Caco-2 (cell line): ENCODE measurements at regions of chr16 and their contacts with region 1.

Region 1: DNA sequence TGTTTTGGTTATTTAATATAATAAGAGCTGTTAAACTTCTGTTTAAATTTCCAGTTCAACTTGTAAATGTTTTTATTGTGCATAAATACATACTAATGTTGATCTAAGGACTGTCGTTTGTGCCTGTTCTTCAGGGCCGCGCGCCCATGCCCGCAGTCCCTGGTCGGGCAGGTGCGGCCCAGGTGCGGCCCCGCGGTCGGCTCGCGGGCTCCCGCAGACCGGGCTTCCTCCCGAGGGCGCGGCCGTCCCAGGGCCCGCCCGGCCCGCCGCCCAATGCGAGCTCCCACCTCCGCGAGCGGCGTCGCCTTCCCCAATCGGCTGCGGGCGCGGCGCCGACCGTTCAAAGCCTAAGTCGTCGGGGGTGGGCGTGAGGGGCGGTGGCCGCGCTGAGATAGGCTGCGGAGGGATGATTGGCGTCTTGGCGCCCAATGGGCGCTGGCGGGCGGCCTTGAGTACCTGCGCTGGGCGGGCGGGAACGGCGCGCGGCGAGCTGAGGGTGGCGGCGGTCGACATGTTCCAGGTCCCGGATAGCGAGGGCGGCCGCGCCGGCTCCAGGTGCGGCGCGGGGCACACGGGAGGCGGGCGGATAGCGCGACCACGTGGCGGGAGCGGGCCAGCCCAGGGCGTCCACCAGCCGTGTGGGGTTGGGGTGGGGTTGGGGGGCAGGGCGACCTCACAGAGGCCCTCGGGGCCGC is at the start of gene JPT2:
- DNase-seq: peak; percentile 96 to 97
- H3K4me3 ChIP-seq: peak within 1 kb of the TSS; percentile 82
- H3K4me3 Mint-ChIP-seq: peak within 1 kb of the TSS; percentile 96
- H3K27ac Mint-ChIP-seq: peak within 1 kb of the TSS; percentile 91
- H3K4me1 ChIP-seq: peaks cover 9% of the 10 kb centered on the region; the same call in 1 of the 2 replicates
- H3K4me1 Mint-ChIP-seq: peaks cover 8% of the 10 kb centered on the region
- H3K27me3 ChIP-seq: no peaks in the 10 kb centered on the region
- H3K27me3 Mint-ChIP-seq: no peaks in the 10 kb centered on the region
- CTCF ChIP-seq: no peak
- total RNA-seq, gene JPT2: 170 and 178 TPM in 2 replicates

Region 2: DNA sequence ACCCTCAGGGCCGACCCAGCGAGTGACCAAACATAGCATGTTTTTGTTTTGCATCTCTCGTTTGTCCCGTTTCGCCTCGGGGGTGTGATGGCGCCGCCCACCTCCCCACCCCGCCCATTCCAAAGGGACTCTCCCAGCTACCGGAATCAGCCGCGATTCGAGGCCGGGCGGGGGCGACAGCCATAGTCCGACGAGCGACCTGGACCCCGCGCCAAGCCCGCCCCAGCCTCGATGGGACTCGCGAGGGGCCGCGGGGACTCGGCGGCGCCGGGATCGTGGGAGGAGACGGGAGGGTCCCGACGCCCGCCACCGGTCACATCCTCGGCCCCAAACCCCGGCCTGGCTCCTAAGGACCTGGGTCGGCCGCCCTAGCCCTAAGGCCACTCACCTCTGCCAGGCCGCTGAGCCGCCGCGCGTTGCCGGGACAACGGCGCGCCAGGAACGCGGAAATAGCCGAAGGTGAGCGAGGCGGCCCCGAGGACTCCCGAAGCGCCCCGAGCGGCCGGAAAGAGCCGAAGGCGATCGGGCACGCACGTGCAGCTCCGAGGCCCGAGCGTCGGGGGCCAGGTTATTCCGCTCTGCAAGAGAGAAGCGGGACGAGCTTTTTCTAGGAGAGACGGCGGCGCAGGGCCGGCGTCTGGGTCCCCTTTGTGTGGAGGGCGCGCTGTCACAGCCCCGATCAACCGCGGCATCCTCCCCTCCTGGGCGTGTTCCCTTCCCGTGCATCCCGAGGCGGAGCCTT is 67.5 kb before region 1 on chr16:
- CTCF ChIA-PET with region 1: interaction called, 6 read pairs
- POLR2A ChIA-PET with region 1: no interaction called
- intact Hi-C with region 1: loop called (anchors 10 kb)
- DNase-seq: peak; percentile 87 to 95
- H3K4me3 ChIP-seq: peak overlapping the region; percentile 68
- H3K4me3 Mint-ChIP-seq: peak overlapping the region; percentile 80
- H3K27ac Mint-ChIP-seq: peak overlapping the region; percentile 92
- H3K4me1 ChIP-seq: peaks cover 5% of the 10 kb centered on the region; the same call in 1 of the 2 replicates
- H3K4me1 Mint-ChIP-seq: peaks cover 5% of the 10 kb centered on the region
- H3K27me3 ChIP-seq: no peaks in the 10 kb centered on the region
- H3K27me3 Mint-ChIP-seq: no peaks in the 10 kb centered on the region
- CTCF ChIP-seq: no peak

Region 3: DNA sequence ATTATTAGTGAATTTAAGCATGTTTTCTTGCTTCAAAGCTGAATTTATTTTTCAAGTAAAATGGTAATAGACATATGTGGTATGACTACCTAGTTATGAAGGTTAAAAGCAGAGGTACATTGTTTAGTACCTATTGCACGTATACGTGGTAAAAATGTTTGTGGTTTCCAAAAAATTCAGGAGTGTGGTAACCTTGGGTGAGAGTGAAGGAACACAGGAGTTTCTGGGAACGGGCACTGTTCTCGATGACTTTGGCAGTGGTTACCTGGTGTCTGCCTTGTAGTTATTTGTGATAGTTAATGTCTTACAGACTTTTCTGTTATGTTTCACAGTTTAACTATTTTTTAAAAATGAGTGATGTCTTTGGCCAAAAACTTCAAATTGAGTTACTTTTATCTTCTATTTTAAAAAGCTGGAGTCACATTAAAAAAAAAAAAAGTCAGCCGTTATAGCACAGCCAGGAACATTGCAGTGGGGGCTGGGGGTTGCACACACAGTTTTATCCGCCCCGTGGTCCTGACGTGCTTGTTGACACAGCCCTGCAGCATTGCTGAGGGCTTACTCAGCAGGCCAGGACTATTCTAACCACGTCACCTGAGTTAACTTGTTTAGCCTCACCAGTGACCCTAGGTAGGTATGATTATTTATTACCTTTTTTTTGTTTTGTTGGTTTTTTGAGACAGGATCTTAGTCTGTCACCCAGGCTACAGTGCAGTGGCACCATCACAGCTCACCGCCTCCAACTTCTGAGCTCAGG is 11.0 kb after region 1 on chr16:
- CTCF ChIA-PET with region 1: interaction called, 12 read pairs
- POLR2A ChIA-PET with region 1: interaction called, 8 read pairs
- intact Hi-C with region 1: loop called (anchors 1 kb)
- DNase-seq: peak; percentile 85 to 89
- H3K4me3 ChIP-seq: no peak overlapping the region
- H3K4me3 Mint-ChIP-seq: peak overlapping the region; percentile 72
- H3K27ac Mint-ChIP-seq: peak overlapping the region; percentile 97
- H3K4me1 ChIP-seq: peaks cover 29% of the 10 kb centered on the region
- H3K4me1 Mint-ChIP-seq: peaks cover 26% of the 10 kb centered on the region
- H3K27me3 ChIP-seq: no peaks in the 10 kb centered on the region
- H3K27me3 Mint-ChIP-seq: no peaks in the 10 kb centered on the region
- CTCF ChIP-seq: no peak

Region 4: DNA sequence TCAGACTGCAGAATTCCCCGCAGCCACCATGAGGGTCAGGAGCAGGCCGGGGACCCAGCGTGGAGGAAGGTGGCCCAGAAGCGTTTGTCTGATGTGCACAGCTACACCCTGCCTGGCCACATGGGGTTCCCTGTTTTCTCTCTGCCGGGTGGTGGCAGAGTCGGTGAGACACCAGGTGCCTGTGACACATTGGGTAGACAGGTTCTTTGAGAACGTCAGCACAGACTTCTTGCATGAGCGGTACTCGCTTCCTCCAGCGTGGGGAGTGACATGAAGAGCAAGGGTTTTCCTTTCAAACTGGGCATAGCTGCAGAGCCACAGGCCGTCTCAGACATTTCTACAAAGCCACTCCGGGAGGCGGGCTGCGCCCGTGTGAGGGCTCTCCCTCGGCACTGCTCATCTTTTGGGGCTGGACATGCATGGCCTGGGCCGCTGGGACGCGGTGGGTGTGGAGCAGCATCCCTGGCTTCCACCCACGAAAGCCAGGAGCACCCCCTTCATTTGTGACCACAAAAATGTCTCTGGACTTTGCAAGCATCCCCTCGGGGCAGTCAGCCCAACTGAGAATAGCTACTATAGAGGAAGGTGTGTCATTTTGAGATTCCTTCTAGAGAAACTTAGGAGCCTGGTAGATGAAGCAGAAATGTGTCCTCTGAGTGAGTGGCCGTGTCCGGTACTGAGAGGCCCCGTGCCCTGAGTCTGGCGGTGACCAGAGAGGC is 67.4 kb after region 1 on chr16:
- CTCF ChIA-PET with region 1: no interaction called
- POLR2A ChIA-PET with region 1: no interaction called
- intact Hi-C with region 1: no loop called
- DNase-seq: no peak
- H3K4me3 ChIP-seq: no peak overlapping the region
- H3K4me3 Mint-ChIP-seq: no peak overlapping the region
- H3K27ac Mint-ChIP-seq: no peak overlapping the region
- H3K4me1 ChIP-seq: no peaks in the 10 kb centered on the region
- H3K4me1 Mint-ChIP-seq: no peaks in the 10 kb centered on the region
- H3K27me3 ChIP-seq: no peaks in the 10 kb centered on the region
- H3K27me3 Mint-ChIP-seq: no peaks in the 10 kb centered on the region
- CTCF ChIP-seq: no peak

Region 5: GRCh38 chr16:1782352-1783091 is 104.6 kb after region 1 on chr16 and contains the starts of genes NUBP2 and SPSB3:
- CTCF ChIA-PET with region 1: interaction called, 4 read pairs
- POLR2A ChIA-PET with region 1: interaction called, 12 read pairs
- intact Hi-C with region 1: no loop called
- DNase-seq: peak; percentile 99 to 100
- H3K4me3 ChIP-seq: peak within 1 kb of the TSS; percentile 93
- H3K4me3 Mint-ChIP-seq: peak within 1 kb of the TSS; percentile 86
- H3K27ac Mint-ChIP-seq: peak within 1 kb of the TSS; percentile 81
- H3K4me1 ChIP-seq: peaks cover 7% of the 10 kb centered on the region
- H3K4me1 Mint-ChIP-seq: peaks cover 8% of the 10 kb centered on the region
- H3K27me3 ChIP-seq: no peaks in the 10 kb centered on the region
- H3K27me3 Mint-ChIP-seq: no peaks in the 10 kb centered on the region
- CTCF ChIP-seq: no peak
- total RNA-seq, gene NUBP2: 61.9 and 65.3 TPM in 2 replicates
- total RNA-seq, gene SPSB3: 26.0 and 28.0 TPM in 2 replicates